ENCODE measurements at regions of chr16 and their contacts with region 1.

Region 1: DNA sequence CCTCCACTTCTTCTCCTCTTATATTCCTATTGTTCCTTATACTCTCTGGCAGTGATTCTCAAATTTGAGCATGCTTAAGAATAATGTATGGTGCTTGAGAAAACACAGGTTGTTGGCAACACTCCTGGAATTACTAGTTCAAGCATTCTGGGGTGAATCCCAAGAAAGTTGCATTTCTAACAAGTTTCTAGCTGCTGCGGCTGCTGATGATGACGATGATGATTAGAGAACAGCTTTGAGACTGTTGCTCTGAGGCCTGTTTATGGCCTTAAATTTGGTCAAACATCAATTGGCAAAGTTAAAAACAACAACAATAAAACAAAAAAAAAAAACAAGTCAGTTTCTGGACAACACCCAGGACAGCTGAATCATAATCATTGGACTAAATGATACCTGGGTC is 961.9 kb downstream of the CDH11 start:
- DNase-seq: no peak
- H3K4me3 ChIP-seq: no peak overlapping the region
- H3K27ac ChIP-seq: no peak overlapping the region
- H3K4me1 ChIP-seq: peaks cover 33% of the 10 kb centered on the region
- CTCF ChIP-seq: no peak

Region 2: DNA sequence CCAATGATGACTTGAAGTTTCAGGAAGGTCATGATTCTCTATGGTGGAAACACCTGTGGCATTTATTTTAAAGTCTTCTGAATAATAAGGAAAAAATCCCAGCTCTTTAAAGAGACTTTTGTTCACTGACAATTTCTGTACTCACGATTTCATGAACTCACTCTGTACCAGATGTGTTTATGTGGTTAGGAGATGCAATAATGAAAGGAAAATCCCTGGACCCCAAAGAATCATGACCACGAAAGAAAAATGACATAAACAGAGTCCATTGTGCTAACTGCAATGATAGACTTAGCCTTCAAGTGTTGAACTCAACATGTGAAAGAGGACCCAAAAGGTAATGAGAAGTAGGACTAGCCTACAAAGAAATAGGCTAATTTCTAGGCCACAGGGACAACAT is 14.4 kb after region 1 on chr16:
- CTCF ChIA-PET with region 1: interaction called, 4 read pairs
- POLR2A ChIA-PET with region 1: interaction called, 21 read pairs
- intact Hi-C with region 1: no loop called
- DNase-seq: no peak
- H3K4me3 ChIP-seq: no peak overlapping the region
- H3K27ac ChIP-seq: no peak overlapping the region
- H3K4me1 ChIP-seq: peaks cover 14% of the 10 kb centered on the region
- CTCF ChIP-seq: no peak